Activated naive CD4-positive, alpha-beta T cell treated with anti-CD3 and anti-CD28 coated beads for 36 hours (primary cell): ENCODE measurements at regions of chr2 and their contacts with region 1.

Region 1: GRCh38 chr2:180980106-180980942 is at the start of gene UBE2E3:
- DNase-seq: peak; percentile 85
- H3K4me3 Mint-ChIP-seq: peak within 1 kb of the TSS; percentile 95
- H3K27ac Mint-ChIP-seq: peak within 1 kb of the TSS; percentile 91
- H3K4me1 Mint-ChIP-seq: peaks cover 29% of the 10 kb centered on the region
- H3K27me3 Mint-ChIP-seq: no peaks in the 10 kb centered on the region
- total RNA-seq, gene UBE2E3: 25.8 to 29.5 TPM

Region 2: DNA sequence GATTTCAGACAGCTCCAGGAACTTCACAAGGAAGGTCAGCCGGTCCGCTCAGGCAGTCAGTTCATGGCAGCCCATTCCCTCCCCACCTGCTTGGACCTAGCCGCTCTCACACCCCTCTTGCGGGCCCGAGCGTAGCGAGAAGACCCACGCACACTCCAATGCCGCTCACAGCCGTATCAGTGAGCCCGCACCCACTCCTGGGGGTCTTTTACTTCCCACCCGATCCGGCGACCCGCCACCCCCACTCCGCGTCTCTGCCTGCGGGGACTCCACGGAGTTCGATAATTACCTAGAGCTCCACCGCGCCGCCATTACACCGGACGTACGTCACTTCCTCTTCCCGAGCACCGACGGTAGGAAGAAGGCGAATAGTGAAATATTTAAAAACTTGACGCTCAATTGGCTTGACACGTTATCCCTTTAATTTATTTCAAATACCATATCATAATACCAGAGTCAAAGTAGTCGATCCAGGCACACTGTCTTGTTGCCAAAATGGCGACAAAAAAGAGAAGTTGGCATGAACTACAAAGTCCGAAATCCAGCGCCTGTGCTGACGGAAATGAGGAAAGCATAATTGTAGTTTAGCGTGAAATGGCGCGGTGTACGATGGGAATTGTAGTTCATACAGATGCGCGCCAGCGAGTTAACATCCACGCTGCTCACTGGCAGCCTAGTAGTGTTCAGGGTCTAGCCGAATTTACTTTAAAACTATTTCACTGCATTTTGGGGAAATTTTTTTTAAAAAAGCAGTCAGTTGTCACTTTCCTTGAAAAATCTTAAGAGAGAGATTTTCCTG is 973.3 kb before region 1 on chr2 and contains the start of gene CWC22:
- CTCF ChIA-PET with region 1: no interaction called
- intact Hi-C with region 1: loop called (anchors 2 kb)
- DNase-seq: peak; percentile 93
- H3K4me3 Mint-ChIP-seq: peak within 1 kb of the TSS; percentile 92
- H3K27ac Mint-ChIP-seq: peak within 1 kb of the TSS; percentile 100
- H3K4me1 Mint-ChIP-seq: peaks cover 36% of the 10 kb centered on the region
- H3K27me3 Mint-ChIP-seq: no peaks in the 10 kb centered on the region
- total RNA-seq, gene CWC22: 20.4 TPM

Region 3: GRCh38 chr2:180938451-180938850 is 41.9 kb before region 1 on chr2:
- CTCF ChIA-PET with region 1: no interaction called
- intact Hi-C with region 1: loop called (anchors 1 kb)
- DNase-seq: no peak
- H3K4me3 Mint-ChIP-seq: no peak overlapping the region
- H3K27ac Mint-ChIP-seq: no peak overlapping the region
- H3K4me1 Mint-ChIP-seq: peaks cover 17% of the 10 kb centered on the region
- H3K27me3 Mint-ChIP-seq: peaks cover 3% of the 10 kb centered on the region

Region 4: DNA sequence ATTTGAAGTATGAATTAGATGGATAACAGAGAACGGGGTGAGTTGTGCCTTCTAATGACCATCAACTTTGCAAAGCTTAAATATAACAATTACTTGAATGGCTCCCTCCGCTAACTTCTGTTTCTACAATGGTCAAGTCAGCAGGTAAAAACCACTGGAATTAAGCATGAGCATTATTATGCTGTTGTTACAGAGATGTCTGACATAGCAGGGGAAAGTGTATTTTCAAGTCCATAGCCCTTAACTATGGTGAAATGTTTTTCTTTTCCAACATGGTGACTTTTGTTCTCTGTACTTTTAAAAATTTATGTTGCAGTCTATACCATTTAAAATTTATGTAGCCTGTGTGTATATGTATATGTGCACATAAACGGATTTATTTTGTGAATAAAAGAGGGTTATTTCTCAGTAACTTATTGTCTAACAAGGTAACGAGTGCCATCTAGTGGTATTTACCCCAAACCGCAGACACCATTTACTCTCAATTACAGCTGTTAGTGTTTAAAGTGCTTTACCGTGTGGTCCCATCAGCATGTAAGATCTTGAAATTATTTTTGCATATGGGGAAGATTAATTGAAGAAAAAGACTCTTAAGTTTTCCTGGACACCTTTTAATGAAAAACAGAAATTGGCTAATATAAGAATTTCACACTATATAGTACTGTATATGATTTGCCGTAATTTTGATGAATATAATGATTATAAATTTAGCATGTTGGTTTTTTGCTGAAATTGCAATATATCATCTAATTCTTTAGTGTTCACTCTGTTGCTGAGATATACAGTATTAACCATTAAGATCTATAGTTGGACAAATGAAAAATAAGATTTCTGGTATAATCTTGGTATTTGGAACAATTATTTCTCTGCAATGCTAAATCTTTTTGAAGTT is 78.3 kb after region 1 on chr2:
- CTCF ChIA-PET with region 1: interaction called, 7 read pairs
- intact Hi-C with region 1: loop called (anchors 1 kb)
- DNase-seq: peak; percentile 61
- H3K4me3 Mint-ChIP-seq: no peak overlapping the region
- H3K27ac Mint-ChIP-seq: no peak overlapping the region
- H3K4me1 Mint-ChIP-seq: no peaks in the 10 kb centered on the region
- H3K27me3 Mint-ChIP-seq: no peaks in the 10 kb centered on the region

Region 5: GRCh38 chr2:182715896-182716668 is 1735.8 kb after region 1 on chr2 and contains the start of gene DNAJC10:
- CTCF ChIA-PET with region 1: no interaction called
- intact Hi-C with region 1: loop called (anchors 5 kb)
- DNase-seq: peak; percentile 89
- H3K4me3 Mint-ChIP-seq: no peak within 1 kb of the TSS
- H3K27ac Mint-ChIP-seq: no peak within 1 kb of the TSS
- H3K4me1 Mint-ChIP-seq: peaks cover 10% of the 10 kb centered on the region
- H3K27me3 Mint-ChIP-seq: no peaks in the 10 kb centered on the region
- total RNA-seq, gene DNAJC10: 40.8 to 41.5 TPM